Activated CD4-positive, alpha-beta T cell treated with anti-CD3 and anti-CD28 coated beads for 36 hours (primary cell): ENCODE measurements at regions of chr12 and their contacts with region 1.

Region 1: DNA sequence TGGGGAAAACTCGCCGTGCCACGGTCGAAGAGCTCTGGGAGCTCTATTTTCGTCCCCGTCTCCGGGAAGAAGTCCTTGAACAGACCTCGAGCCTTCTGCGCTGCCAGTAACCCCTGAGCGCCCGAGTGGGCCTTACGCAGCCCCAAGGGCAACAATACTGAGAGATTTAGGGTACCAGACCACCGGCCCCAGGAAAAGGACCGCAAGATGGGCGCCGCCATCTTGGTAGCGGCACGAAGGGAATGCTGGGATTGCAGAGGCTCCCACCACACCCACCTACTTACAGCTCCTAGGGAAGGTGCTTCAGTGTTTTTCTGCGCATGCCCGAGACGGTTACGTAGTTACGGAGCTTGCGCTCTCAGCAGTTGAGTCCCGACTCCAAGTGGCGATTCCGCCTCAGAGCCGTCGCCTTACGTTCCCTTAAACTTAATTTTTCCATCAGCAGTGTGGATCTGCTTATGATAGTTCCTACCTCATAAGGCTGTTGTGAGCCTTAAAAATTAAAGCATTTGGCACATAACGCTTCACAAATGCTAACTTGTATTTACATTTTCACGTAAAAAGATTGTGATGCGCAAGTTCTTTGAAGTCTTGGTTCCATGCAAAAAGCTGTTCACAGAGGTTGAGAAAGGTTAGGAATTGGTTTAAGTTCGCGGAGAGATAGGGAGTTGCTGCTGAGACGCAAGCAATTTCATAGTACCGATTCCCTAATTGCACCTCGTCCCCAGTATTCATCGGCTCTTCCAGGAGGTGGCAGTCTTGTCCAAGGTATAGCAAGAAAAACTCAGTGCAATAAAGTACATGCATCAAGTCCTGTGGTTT is at the start of gene YARS2:
- DNase-seq: peak; percentile 92
- ATAC-seq: peak; percentile 92
- H3K4me3 Mint-ChIP-seq: peak within 1 kb of the TSS; percentile 88
- H3K27ac Mint-ChIP-seq: peak within 1 kb of the TSS; percentile 95
- H3K4me1 Mint-ChIP-seq: peaks cover 20% of the 10 kb centered on the region
- H3K27me3 Mint-ChIP-seq: no peaks in the 10 kb centered on the region
- total RNA-seq, gene YARS2: 33.0 to 45.9 TPM

Region 2: GRCh38 chr12:31659087-31659933 is 1096.6 kb before region 1 on chr12 and contains the start of gene ETFBKMT:
- CTCF ChIA-PET with region 1: no interaction called
- POLR2A ChIA-PET with region 1: interaction called, 3 read pairs
- intact Hi-C with region 1: loop called in 1 of 2 experiments (anchors 5 kb)
- DNase-seq: peak; percentile 96
- ATAC-seq: peak; percentile 99
- H3K4me3 Mint-ChIP-seq: peak within 1 kb of the TSS; percentile 87
- H3K27ac Mint-ChIP-seq: peak within 1 kb of the TSS; percentile 100
- H3K4me1 Mint-ChIP-seq: peaks cover 13% of the 10 kb centered on the region
- H3K27me3 Mint-ChIP-seq: no peaks in the 10 kb centered on the region
- total RNA-seq, gene ETFBKMT: 0.35 to 1.4 TPM

Region 3: GRCh38 chr12:32455607-32456071 is 300.2 kb before region 1 on chr12:
- CTCF ChIA-PET with region 1: interaction called, 20 read pairs
- POLR2A ChIA-PET with region 1: no interaction called
- intact Hi-C with region 1: loop called (anchors 1 kb)
- DNase-seq: peak; percentile 8
- ATAC-seq: no peak
- H3K4me3 Mint-ChIP-seq: no peak overlapping the region
- H3K27ac Mint-ChIP-seq: no peak overlapping the region
- H3K4me1 Mint-ChIP-seq: no peaks in the 10 kb centered on the region
- H3K27me3 Mint-ChIP-seq: peaks cover 1% of the 10 kb centered on the region

Region 4: GRCh38 chr12:32743264-32743663 is 12.6 kb before region 1 on chr12:
- CTCF ChIA-PET with region 1: interaction called, 15 read pairs
- POLR2A ChIA-PET with region 1: interaction called, 3 read pairs
- intact Hi-C with region 1: no loop called
- DNase-seq: no peak
- ATAC-seq: peak; percentile 47
- H3K4me3 Mint-ChIP-seq: no peak overlapping the region
- H3K27ac Mint-ChIP-seq: no peak overlapping the region
- H3K4me1 Mint-ChIP-seq: peaks cover 16% of the 10 kb centered on the region
- H3K27me3 Mint-ChIP-seq: no peaks in the 10 kb centered on the region

Region 5: DNA sequence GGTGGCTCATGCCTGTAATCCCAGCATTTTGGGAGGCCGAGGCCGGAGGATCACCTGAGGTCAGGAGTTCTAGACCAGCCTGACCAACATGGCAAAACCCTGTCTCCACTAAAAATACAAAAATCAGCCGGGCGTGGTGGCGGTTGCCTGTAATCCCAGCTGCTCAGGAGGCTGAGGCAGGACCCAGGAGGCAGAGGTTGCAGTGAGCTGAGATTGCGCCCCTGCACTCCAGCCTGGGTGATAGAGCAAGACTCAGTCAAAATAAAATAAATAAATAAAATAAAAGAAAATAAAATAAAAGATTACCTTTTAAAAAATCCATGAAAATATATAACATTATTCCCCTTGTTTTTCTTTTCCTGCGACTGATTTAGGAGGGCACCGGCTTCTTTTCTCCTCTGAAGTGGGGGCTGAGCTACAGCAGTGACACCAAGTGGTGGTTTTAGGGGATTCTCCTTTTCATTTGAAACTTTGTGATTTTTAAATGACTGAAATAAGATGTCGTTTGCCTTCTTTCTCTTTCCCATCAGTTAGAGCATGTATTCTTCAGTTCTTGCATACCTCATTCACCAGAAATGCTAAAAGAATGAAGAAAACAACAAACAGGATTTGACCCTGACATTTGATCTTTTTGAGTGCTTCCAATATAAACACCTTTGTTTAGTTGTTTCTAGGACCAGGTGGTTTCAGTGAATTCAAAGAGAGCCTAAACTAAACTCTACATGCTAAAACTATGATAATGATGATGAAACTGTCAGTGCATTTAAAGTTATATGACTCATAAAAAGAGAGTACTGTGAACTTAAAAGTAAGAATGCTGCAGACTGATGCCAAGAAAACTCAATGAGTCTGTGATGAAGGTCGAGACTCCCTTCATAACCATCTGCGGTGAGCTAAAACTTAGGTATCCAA is 163.3 kb after region 1 on chr12:
- CTCF ChIA-PET with region 1: interaction called, 4 read pairs
- POLR2A ChIA-PET with region 1: no interaction called
- intact Hi-C with region 1: loop called (anchors 1 kb)
- DNase-seq: peak; percentile 6
- ATAC-seq: no peak
- H3K4me3 Mint-ChIP-seq: no peak overlapping the region
- H3K27ac Mint-ChIP-seq: no peak overlapping the region
- H3K4me1 Mint-ChIP-seq: no peaks in the 10 kb centered on the region
- H3K27me3 Mint-ChIP-seq: no peaks in the 10 kb centered on the region

Region 6: GRCh38 chr12:34218165-34219045 is 1462.5 kb after region 1 on chr12:
- CTCF ChIA-PET with region 1: no interaction called
- POLR2A ChIA-PET with region 1: no interaction called
- intact Hi-C with region 1: loop called (anchors 1 to 5 kb)
- DNase-seq: peak; percentile 83
- ATAC-seq: peak; percentile 79
- H3K4me3 Mint-ChIP-seq: peak overlapping the region; percentile 75
- H3K27ac Mint-ChIP-seq: peak overlapping the region; percentile 53
- H3K4me1 Mint-ChIP-seq: peaks cover 8% of the 10 kb centered on the region
- H3K27me3 Mint-ChIP-seq: peaks cover 10% of the 10 kb centered on the region